Calu3 (cell line): ENCODE measurements at regions of chr2 and their contacts with region 1.

Region 1: GRCh38 chr2:183284606-183285005 is 160.4 kb downstream of the NUP35 start:
- DNase-seq: no peak
- H3K4me3 Mint-ChIP-seq: no peak overlapping the region
- H3K27ac Mint-ChIP-seq: no peak overlapping the region
- H3K4me1 Mint-ChIP-seq: no peaks in the 10 kb centered on the region
- H3K27me3 Mint-ChIP-seq: no peaks in the 10 kb centered on the region
- CTCF ChIP-seq: no peak

Region 2: DNA sequence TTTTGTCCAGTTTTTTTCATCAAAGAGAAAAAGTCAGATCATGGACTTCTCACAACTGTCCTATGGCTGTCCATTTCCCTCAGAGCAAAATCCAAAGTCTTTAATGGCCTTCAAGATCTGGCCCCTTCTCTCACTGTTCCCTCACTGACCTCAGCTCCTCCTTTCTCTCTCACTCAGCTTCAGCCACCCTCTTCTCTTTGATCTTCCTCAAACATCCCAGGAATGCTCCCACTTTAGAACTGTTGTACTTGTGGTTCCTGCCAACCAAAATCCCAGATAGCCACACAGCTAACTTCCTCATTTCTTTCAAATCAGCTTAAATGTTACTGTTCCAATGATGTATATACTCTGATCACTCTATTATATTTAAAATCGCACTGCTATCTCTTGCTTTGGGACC is 77.5 kb before region 1 on chr2:
- CTCF ChIA-PET with region 1: no interaction called
- intact Hi-C with region 1: no loop called
- DNase-seq: no peak
- H3K4me3 Mint-ChIP-seq: no peak overlapping the region
- H3K27ac Mint-ChIP-seq: no peak overlapping the region
- H3K4me1 Mint-ChIP-seq: peaks cover 9% of the 10 kb centered on the region
- H3K27me3 Mint-ChIP-seq: no peaks in the 10 kb centered on the region
- CTCF ChIP-seq: no peak

Region 3: DNA sequence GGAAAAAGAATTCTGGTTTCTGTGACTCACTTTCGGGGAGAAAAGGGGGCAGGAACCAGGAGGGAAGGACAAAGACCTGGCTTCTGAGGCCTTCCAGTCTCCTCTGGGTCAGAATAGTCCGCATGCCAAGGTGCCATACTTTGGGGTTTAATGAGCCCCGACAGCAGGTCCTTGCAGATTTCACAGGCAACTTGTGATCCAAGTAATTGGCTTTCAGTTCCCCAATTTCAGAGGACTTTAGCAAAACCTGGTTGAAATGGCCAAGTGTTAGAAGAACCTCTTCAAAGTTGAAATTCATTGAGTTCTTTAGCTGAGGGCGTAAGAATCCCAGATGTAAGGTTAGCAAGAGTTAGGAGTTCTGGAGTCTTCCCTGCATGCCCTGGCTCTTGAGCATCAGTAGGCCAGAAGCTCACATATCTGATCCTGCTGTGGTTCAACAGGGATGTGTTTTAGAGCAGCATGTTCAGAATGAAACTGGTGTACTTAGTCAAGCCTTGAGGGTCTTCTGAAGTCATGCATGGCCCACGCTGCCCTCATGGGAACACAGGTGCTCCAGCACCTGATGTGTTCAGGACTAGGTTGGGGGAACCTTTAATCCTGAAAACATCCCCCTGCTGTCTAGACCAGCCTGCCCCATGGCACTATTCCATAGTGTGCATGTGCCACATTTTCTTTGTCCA is 17.3 kb before region 1 on chr2:
- CTCF ChIA-PET with region 1: interaction called, 11 read pairs
- intact Hi-C with region 1: no loop called
- DNase-seq: no peak
- H3K4me3 Mint-ChIP-seq: no peak overlapping the region
- H3K27ac Mint-ChIP-seq: no peak overlapping the region
- H3K4me1 Mint-ChIP-seq: no peaks in the 10 kb centered on the region
- H3K27me3 Mint-ChIP-seq: no peaks in the 10 kb centered on the region
- CTCF ChIP-seq: no peak